Caco-2 (cell line): ENCODE measurements at regions of chr12 and their contacts with region 1.

Region 1: DNA sequence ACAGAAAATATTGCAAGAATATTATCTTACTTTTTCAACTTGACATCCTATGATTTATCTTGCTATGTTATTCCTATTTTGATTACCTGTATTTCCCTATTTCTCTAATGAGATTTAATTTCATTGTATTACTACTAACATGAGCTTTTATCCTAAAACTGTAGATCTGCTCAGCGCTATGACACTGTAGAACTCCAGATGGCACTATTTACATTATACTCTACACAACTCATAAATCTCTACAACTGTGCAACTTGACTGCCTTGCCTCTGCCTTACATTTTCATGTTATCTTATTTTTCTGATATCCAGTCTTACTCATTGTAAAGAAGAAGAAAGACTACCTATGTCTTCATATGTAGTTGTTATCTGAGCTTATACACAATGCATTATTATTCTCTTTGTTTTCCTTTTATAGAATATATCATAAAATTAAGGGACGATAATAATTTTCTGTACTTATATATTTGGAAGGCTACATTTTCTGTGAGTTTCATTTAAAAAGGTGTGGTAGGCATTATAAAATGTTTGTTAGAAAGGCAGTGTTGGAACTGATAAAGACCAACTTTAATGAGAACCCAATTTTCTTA is 24.1 kb downstream of the NUP37 start:
- DNase-seq: peak in 1 of 2 experiments; percentile 12
- H3K4me3 ChIP-seq: no peak overlapping the region
- H3K4me3 Mint-ChIP-seq: no peak overlapping the region
- H3K27ac Mint-ChIP-seq: no peak overlapping the region
- H3K4me1 ChIP-seq: no peaks in the 10 kb centered on the region
- H3K4me1 Mint-ChIP-seq: no peaks in the 10 kb centered on the region
- H3K27me3 ChIP-seq: no peaks in the 10 kb centered on the region
- H3K27me3 Mint-ChIP-seq: no peaks in the 10 kb centered on the region
- CTCF ChIP-seq: peak; percentile 44 to 50

Region 2: GRCh38 chr12:102740141-102740955 is 644.6 kb after region 1 on chr12:
- CTCF ChIA-PET with region 1: no interaction called
- POLR2A ChIA-PET with region 1: no interaction called
- intact Hi-C with region 1: loop called (anchors 5 kb)
- DNase-seq: peak in 1 of 2 experiments; percentile 4
- H3K4me3 ChIP-seq: no peak overlapping the region
- H3K4me3 Mint-ChIP-seq: no peak overlapping the region
- H3K27ac Mint-ChIP-seq: no peak overlapping the region
- H3K4me1 ChIP-seq: no peaks in the 10 kb centered on the region
- H3K4me1 Mint-ChIP-seq: no peaks in the 10 kb centered on the region
- H3K27me3 ChIP-seq: no peaks in the 10 kb centered on the region
- H3K27me3 Mint-ChIP-seq: no peaks in the 10 kb centered on the region
- CTCF ChIP-seq: peak in 1 of 2 experiments; percentile 36

Region 3: DNA sequence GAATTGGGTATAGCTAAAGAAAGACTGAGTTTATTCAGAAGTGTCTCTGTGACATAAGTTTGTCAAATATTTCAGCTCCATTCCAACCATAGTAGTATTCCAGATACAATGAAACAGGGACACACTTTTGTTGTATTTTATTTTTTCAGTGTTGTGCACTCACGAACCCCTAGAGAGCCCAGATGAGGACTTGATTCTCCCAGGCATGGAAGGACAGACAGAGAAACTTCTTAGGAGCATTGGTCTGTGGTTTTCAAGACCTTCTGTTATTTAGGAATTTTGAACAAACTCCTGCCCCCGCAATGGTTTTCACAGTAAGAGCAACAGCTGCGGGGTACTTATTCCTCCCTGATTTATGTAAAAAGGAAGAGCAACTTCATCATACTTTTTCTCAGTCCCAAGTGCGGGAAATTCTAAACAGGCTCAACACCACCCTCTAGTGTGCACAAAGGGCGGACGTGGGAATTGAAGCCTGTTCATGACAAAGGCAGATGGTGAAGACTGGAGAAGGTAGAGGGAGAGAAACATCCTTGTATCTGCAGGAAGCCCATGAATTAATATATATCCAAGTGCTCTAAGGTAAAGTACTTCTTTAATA is 673.6 kb after region 1 on chr12:
- CTCF ChIA-PET with region 1: no interaction called
- POLR2A ChIA-PET with region 1: no interaction called
- intact Hi-C with region 1: loop called (anchors 1 kb)
- DNase-seq: peak; percentile 49 to 64
- H3K4me3 ChIP-seq: no peak overlapping the region
- H3K4me3 Mint-ChIP-seq: no peak overlapping the region
- H3K27ac Mint-ChIP-seq: no peak overlapping the region
- H3K4me1 ChIP-seq: no peaks in the 10 kb centered on the region
- H3K4me1 Mint-ChIP-seq: no peaks in the 10 kb centered on the region
- H3K27me3 ChIP-seq: no peaks in the 10 kb centered on the region
- H3K27me3 Mint-ChIP-seq: peaks cover 7% of the 10 kb centered on the region
- CTCF ChIP-seq: peak; percentile 73 to 77